Activated CD4-positive, alpha-beta memory T cell treated with anti-CD3 and anti-CD28 coated beads for 36 hours (primary cell): ENCODE measurements at regions of chr10 and their contacts with region 1.

Region 1: DNA sequence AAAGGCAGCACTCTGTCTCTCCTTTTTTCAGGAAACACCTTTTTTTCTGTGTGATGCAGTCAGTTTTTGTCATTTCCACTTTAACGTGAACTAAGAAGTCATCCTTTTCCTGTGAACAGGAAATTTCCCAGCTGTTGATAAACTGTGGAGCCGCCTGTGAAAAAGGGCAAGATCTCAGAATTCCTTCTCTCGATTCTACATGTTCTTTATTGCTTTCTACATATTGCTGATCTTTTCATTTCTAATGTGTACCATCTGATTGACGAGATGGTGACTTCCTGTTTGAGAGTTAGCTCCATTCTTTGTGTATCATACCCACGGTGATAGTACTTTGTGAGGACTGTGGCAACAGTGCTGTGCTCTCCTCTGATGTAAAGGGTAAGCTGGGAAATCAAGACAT is 50.4 kb downstream of the ADD3 start:
- DNase-seq: no peak
- H3K4me3 Mint-ChIP-seq: peak overlapping the region; percentile 68
- H3K27ac Mint-ChIP-seq: peak overlapping the region; percentile 83
- H3K4me1 Mint-ChIP-seq: peaks cover 83% of the 10 kb centered on the region
- H3K27me3 Mint-ChIP-seq: no peaks in the 10 kb centered on the region

Region 2: GRCh38 chr10:110036640-110037039 is 21.6 kb before region 1 on chr10:
- CTCF ChIA-PET with region 1: interaction called, 6 read pairs
- POLR2A ChIA-PET with region 1: no interaction called
- intact Hi-C with region 1: loop called (anchors 2 kb)
- DNase-seq: no peak
- H3K4me3 Mint-ChIP-seq: no peak overlapping the region
- H3K27ac Mint-ChIP-seq: peak overlapping the region; percentile 54
- H3K4me1 Mint-ChIP-seq: peaks cover 83% of the 10 kb centered on the region
- H3K27me3 Mint-ChIP-seq: no peaks in the 10 kb centered on the region

Region 3: GRCh38 chr10:110216942-110217661 is 158.9 kb after region 1 on chr10:
- CTCF ChIA-PET with region 1: no interaction called
- POLR2A ChIA-PET with region 1: no interaction called
- intact Hi-C with region 1: no loop called
- DNase-seq: no peak
- H3K4me3 Mint-ChIP-seq: no peak overlapping the region
- H3K27ac Mint-ChIP-seq: no peak overlapping the region
- H3K4me1 Mint-ChIP-seq: peaks cover 51% of the 10 kb centered on the region
- H3K27me3 Mint-ChIP-seq: no peaks in the 10 kb centered on the region